H1 (cell line): ENCODE measurements at regions of chr1 and their contacts with region 1.

Region 1: DNA sequence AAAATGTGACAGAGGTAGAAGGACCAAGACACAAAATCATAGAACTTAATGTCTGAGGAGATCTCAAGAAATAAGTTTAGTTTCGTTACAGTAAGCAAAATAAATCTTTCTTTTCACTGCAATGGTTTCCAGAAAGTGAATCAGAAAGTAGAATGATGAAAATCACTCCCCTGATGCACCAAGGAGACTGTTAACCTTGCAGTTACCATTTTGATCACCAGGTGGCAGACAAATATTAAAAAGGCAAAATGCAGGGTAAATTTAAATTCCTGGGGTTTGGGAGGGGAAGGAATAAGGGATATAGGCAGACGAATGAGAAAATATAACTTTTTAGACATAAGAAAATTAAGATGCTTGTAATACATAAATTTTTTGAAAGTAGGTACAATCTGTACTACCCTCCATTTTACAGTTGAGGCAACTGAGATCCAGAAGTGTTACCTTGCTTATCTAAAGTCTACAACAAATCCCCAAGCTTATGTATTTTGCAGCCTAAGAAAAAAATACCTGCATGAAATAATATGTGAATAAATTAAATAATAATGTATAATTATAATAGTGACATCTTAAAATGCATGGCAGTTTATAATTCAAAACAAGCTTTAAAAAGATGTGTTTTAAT is 253.2 kb downstream of the CRB1 start:
- DNase-seq: no peak
- H3K4me3 ChIP-seq: no peak overlapping the region
- H3K27ac ChIP-seq: no peak overlapping the region
- H3K4me1 ChIP-seq: no peaks in the 10 kb centered on the region
- H3K27me3 ChIP-seq: no peaks in the 10 kb centered on the region
- CTCF ChIP-seq: peak in 2 of 3 experiments; percentile 57 to 68; a peak in 3 of 4 replicates
- EP300 ChIP-seq: no peak
- POLR2A ChIP-seq: no peak
- RAD21 ChIP-seq: peak; percentile 76

Region 2: GRCh38 chr1:197399755-197400527 is 121.3 kb before region 1 on chr1:
- CTCF ChIA-PET with region 1: interaction called, 11 read pairs
- POLR2A ChIA-PET with region 1: no interaction called
- DNase-seq: no peak
- H3K4me3 ChIP-seq: no peak overlapping the region
- H3K27ac ChIP-seq: no peak overlapping the region
- H3K4me1 ChIP-seq: no peaks in the 10 kb centered on the region
- H3K27me3 ChIP-seq: no peaks in the 10 kb centered on the region
- CTCF ChIP-seq: peak in 2 of 3 experiments; percentile 56 to 71; a peak in 3 of 4 replicates
- EP300 ChIP-seq: no peak
- POLR2A ChIP-seq: no peak
- RAD21 ChIP-seq: peak; percentile 77

Region 3: DNA sequence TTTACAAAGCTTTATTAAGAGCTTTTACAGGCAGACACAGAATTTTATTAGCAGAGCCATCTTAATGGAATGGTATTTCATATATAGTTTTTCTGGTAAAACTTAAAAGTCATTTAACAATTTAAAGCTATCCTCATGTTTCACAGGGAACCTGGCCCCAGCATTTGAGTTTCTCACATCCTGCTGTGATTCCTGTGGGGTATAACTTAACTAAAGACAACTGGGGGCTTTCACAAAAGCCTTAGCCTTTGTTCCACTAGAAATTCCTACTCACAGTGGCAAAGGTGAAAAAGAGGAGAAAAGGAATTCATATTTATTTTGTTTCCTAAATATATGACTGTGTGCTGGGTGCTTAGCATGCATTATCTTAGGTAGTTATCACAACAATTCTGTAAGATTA is 20.2 kb after region 1 on chr1:
- CTCF ChIA-PET with region 1: interaction called, 14 read pairs
- POLR2A ChIA-PET with region 1: no interaction called
- DNase-seq: no peak
- H3K4me3 ChIP-seq: no peak overlapping the region
- H3K27ac ChIP-seq: no peak overlapping the region
- H3K4me1 ChIP-seq: peaks cover 0 to 9% (median 0%) of the 10 kb centered on the region in 4 experiments; a peak in 3 of 7 replicates
- H3K27me3 ChIP-seq: no peaks in the 10 kb centered on the region
- CTCF ChIP-seq: no peak
- EP300 ChIP-seq: no peak
- POLR2A ChIP-seq: no peak
- RAD21 ChIP-seq: no peak

Region 4: DNA sequence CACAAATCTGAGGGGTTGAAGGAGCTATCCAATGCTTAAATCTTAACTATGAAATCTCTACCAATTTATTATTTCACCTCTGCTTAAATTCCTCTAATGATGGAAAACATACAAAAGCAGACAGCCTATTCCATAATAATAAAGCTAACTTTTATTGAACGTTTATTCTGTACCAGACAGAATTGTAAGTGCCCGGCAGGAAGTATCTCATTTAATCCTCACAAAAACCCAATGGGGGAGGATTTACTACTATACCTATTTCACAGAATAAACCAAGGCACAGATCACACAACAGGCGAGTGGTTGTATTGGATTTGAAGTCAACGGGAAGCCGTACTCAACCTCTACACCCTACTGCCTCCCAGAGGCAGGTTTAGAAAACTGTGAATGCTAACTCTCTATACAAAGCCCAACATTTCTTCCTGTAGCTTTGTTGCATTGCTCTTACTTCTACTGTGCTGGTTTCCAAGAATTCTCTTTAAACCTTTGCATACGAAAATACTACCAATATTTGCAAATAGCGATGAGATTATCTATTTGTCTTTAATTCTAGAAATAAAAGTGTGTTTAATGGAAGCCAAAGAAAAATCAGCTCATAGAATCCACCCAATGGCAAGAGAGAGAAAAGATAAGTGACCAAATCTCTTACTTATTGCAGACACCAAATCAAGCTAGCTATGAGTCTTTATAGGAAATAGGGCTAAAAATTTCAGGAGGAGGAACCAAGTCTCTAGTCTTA is 347.7 kb after region 1 on chr1:
- CTCF ChIA-PET with region 1: interaction called, 15 read pairs
- POLR2A ChIA-PET with region 1: no interaction called
- DNase-seq: peak in 1 of 2 experiments; percentile 23
- H3K4me3 ChIP-seq: no peak overlapping the region
- H3K27ac ChIP-seq: no peak overlapping the region
- H3K4me1 ChIP-seq: no peaks in the 10 kb centered on the region; a peak in 1 of 7 replicates
- H3K27me3 ChIP-seq: no peaks in the 10 kb centered on the region
- CTCF ChIP-seq: peak; percentile 7 to 83 (median 82)
- EP300 ChIP-seq: no peak
- POLR2A ChIP-seq: no peak
- RAD21 ChIP-seq: peak; percentile 97 to 99

Region 5: DNA sequence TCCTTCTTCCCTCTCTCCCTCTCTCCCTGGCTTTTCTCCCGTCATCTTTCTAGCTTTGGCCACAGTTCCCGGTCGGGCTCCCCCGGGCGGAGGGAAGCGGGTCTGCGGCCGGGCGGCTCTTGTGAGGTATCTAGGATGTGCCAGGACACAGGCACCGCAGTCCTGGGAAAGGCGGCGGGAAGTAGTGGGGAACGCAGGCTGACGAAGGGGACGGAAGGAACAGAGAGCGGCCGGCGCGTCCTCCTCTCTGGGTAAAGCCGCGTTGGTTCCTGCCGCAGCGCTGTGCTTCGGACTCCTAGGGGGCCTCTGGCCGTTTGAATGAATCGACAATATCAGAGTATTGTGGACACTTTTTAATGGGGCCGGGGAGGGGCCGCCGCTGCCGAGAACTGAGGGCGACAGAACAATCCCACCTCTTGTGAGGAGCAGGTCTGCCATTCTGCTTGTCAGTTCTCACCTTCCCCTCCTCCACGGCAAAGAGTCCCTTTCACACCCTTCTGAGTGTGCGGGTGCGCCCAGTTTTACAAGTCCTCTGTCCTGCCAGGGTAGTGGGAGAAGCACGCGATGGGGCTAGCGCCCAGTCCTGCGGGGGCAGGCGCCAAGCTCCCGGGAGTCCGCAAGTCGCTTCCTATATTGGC is 394.8 kb after region 1 on chr1:
- CTCF ChIA-PET with region 1: interaction called, 15 read pairs
- POLR2A ChIA-PET with region 1: no interaction called
- DNase-seq: peak in 1 of 2 experiments; percentile 83
- H3K4me3 ChIP-seq: peak overlapping the region; percentile 3 to 55 (median 31); a peak in 6 of 8 replicates
- H3K27ac ChIP-seq: no peak overlapping the region
- H3K4me1 ChIP-seq: peaks cover 15 to 58% (median 32%) of the 10 kb centered on the region in 4 experiments
- H3K27me3 ChIP-seq: peaks cover 98 to 100% (median 99%) of the 10 kb centered on the region in 4 experiments
- CTCF ChIP-seq: peak; percentile 57 to 69 (median 57)
- EP300 ChIP-seq: no peak
- POLR2A ChIP-seq: no peak
- RAD21 ChIP-seq: peak; percentile 52 to 61

Region 6: GRCh38 chr1:197924516-197925123 is 403.4 kb after region 1 on chr1:
- CTCF ChIA-PET with region 1: interaction called, 33 read pairs
- POLR2A ChIA-PET with region 1: no interaction called
- DNase-seq: no peak
- H3K4me3 ChIP-seq: no peak overlapping the region
- H3K27ac ChIP-seq: no peak overlapping the region
- H3K4me1 ChIP-seq: peaks cover 8 to 17% (median 10%) of the 10 kb centered on the region in 4 experiments
- H3K27me3 ChIP-seq: peaks cover 28 to 40% (median 37%) of the 10 kb centered on the region in 4 experiments
- CTCF ChIP-seq: peak; percentile 9 to 83 (median 75)
- EP300 ChIP-seq: no peak
- POLR2A ChIP-seq: no peak
- RAD21 ChIP-seq: peak; percentile 88 to 90